Caco-2 (cell line): ENCODE measurements at regions of chr12 and their contacts with region 1.

Region 1: GRCh38 chr12:24078318-24078765 is 128.9 kb upstream of the SOX5 start:
- DNase-seq: peak; percentile 86 to 88
- H3K4me3 ChIP-seq: no peak overlapping the region
- H3K4me3 Mint-ChIP-seq: peak overlapping the region; percentile 53
- H3K27ac Mint-ChIP-seq: peak overlapping the region; percentile 18
- H3K4me1 ChIP-seq: peaks cover 55% of the 10 kb centered on the region
- H3K4me1 Mint-ChIP-seq: peaks cover 50% of the 10 kb centered on the region
- H3K27me3 ChIP-seq: no peaks in the 10 kb centered on the region
- H3K27me3 Mint-ChIP-seq: no peaks in the 10 kb centered on the region
- CTCF ChIP-seq: no peak

Region 2: GRCh38 chr12:24036438-24037216 is 41.7 kb before region 1 on chr12:
- CTCF ChIA-PET with region 1: no interaction called
- POLR2A ChIA-PET with region 1: no interaction called
- intact Hi-C with region 1: loop called (anchors 1 kb)
- DNase-seq: peak in 1 of 2 experiments; percentile 36
- H3K4me3 ChIP-seq: no peak overlapping the region
- H3K4me3 Mint-ChIP-seq: no peak overlapping the region
- H3K27ac Mint-ChIP-seq: no peak overlapping the region
- H3K4me1 ChIP-seq: peaks cover 38% of the 10 kb centered on the region
- H3K4me1 Mint-ChIP-seq: peaks cover 28% of the 10 kb centered on the region
- H3K27me3 ChIP-seq: no peaks in the 10 kb centered on the region
- H3K27me3 Mint-ChIP-seq: no peaks in the 10 kb centered on the region
- CTCF ChIP-seq: no peak

Region 3: GRCh38 chr12:24088751-24089509 is 10.6 kb after region 1 on chr12:
- CTCF ChIA-PET with region 1: no interaction called
- POLR2A ChIA-PET with region 1: no interaction called
- intact Hi-C with region 1: no loop called
- DNase-seq: no peak
- H3K4me3 ChIP-seq: no peak overlapping the region
- H3K4me3 Mint-ChIP-seq: no peak overlapping the region
- H3K27ac Mint-ChIP-seq: no peak overlapping the region
- H3K4me1 ChIP-seq: peaks cover 23% of the 10 kb centered on the region
- H3K4me1 Mint-ChIP-seq: peaks cover 21% of the 10 kb centered on the region
- H3K27me3 ChIP-seq: no peaks in the 10 kb centered on the region
- H3K27me3 Mint-ChIP-seq: no peaks in the 10 kb centered on the region
- CTCF ChIP-seq: no peak